Heart right ventricle (tissue), 16 donors: ENCODE measurements at regions of chrX and their contacts with region 1.

Region 1: DNA sequence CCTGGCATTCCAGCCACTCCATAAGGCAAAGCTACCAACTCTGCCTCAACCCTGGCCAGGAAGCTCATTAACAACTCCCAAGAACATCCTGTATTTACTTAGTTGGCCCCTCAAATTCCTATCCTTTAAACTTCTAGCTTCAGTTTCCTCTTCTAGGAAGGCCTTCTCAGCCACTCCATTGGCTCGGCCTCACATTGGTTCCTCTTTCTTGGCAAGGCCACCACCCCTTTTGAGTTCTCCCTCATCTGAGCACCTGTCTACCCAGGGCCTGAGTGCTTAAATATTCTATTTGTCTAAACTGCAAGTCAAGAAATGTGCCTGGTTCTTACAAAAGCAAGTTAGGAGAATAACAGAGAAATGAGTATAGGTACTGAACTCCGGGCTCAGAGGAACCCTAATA is 10.0 kb downstream of the SMC1A start:
- DNase-seq: no peak
- ATAC-seq: no peak
- H3K4me3 ChIP-seq: no peak overlapping the region
- H3K27ac ChIP-seq: no peak overlapping the region
- H3K4me1 ChIP-seq: no peaks in the 10 kb centered on the region
- H3K27me3 ChIP-seq: no peaks in the 10 kb centered on the region
- CTCF ChIP-seq: no peak

Region 2: GRCh38 chrX:52995135-52996020 is 417.1 kb before region 1 on chrX:
- intact Hi-C with region 1: no loop called
- DNase-seq: peak; percentile 91 to 95
- ATAC-seq: peak; percentile 97 to 100 (median 99)
- H3K4me3 ChIP-seq: peak overlapping the region; percentile 29 to 74 (median 58)
- H3K27ac ChIP-seq: peak overlapping the region; percentile 82 to 94 (median 90)
- H3K4me1 ChIP-seq: peaks cover 0 to 24% (median 12%) of the 10 kb centered on the region in 9 donors
- H3K27me3 ChIP-seq: peaks cover 0 to 20% (median 0%) of the 10 kb centered on the region in 7 donors
- CTCF ChIP-seq: peak; percentile 30 to 79 (median 65)

Region 3: DNA sequence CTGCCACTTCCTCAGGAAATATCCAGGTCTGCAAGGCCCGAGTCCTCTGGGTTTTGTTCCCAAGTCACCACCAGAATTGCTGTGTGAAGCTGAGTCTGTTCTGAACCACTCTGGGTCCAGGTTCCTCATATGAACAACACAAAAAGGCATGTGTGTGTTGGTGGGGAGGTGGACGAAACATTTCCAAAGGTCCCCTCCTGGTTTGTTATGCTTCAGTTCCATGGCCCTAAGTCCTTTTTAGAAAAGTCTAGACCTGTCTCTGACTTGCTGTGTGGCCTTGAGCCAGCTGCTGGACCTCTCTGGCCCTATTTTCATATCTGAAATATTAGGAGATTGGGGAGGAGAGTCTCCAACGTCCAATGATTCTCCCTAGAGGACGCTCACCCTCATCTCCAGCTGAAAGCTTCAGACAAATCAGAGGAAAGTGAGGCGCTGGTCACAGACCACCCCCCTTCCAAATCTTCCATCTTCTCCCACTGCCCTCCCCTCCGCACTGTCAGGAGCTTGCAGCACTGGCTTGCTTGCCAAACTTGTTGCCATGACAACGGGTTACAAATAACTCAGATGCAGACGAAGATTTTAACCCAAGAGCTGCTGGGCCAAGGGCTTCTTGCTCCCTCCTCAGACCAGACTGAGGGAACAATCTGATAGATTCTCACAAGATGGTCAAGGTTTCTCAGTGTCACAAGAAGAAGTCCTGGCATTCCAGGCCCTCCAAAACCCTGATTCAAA is 54.5 kb before region 1 on chrX:
- intact Hi-C with region 1: no loop called
- DNase-seq: no peak
- ATAC-seq: no peak
- H3K4me3 ChIP-seq: no peak overlapping the region
- H3K27ac ChIP-seq: no peak overlapping the region
- H3K4me1 ChIP-seq: peaks cover 0 to 11% (median 0%) of the 10 kb centered on the region in 9 donors
- H3K27me3 ChIP-seq: peaks cover 0 to 48% (median 0%) of the 10 kb centered on the region in 7 donors
- CTCF ChIP-seq: no peak

Region 4: GRCh38 chrX:53481816-53482465 is 69.5 kb after region 1 on chrX:
- intact Hi-C with region 1: loop called in 1 of 10 experiments (anchors 10 kb)
- DNase-seq: peak in 1 of 2 donors; percentile 12
- ATAC-seq: no peak
- H3K4me3 ChIP-seq: no peak overlapping the region
- H3K27ac ChIP-seq: no peak overlapping the region
- H3K4me1 ChIP-seq: no peaks in the 10 kb centered on the region
- H3K27me3 ChIP-seq: peaks cover 0 to 55% (median 0%) of the 10 kb centered on the region in 7 donors
- CTCF ChIP-seq: peak in 8 of 9 donors; percentile 10 to 66 (median 49)